Ovary (tissue), 10 donors: ENCODE measurements at regions of chr12 and their contacts with region 1.

Region 1: GRCh38 chr12:90106568-90106967 is 397.9 kb upstream of the ATP2B1 start:
- DNase-seq: no peak
- H3K4me3 ChIP-seq: no peak overlapping the region
- H3K27ac ChIP-seq: no peak overlapping the region
- H3K4me1 ChIP-seq: peaks cover under 1% of the 10 kb centered on the region
- H3K27me3 ChIP-seq: no peaks in the 10 kb centered on the region
- CTCF ChIP-seq: no peak
- EP300 ChIP-seq: no peak
- POLR2A ChIP-seq: no peak

Region 2: DNA sequence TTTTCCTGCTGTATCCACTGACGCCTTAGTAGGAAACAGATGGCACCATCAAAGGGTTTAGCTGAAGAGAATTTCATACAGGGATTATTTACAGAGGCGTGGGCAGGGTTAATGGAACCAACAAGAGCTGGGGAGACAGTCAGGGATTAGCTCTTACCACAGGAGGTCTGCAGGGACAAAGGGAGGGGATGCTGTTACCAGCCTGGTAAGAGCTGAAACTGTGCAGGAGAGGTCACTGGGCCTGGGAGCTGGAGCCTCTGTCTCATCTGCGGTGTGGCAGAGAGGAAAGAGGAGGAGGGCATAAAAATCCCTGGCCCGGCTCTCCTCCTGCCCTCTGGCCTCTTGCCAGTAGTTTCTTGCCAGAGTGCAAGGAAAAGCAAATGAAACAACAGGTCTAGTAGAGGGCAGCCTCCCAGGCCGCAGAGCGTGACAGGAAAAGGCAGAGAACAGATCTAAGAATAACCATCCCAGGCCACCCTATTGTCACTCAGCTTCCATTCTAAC is 561.8 kb before region 1 on chr12:
- intact Hi-C with region 1: loop called in 1 of 4 experiments (anchors 5 kb)
- DNase-seq: peak in 3 of 5 donors; percentile 13 to 40 (median 31)
- H3K4me3 ChIP-seq: no peak overlapping the region
- H3K27ac ChIP-seq: no peak overlapping the region
- H3K4me1 ChIP-seq: peaks cover 3% of the 10 kb centered on the region
- H3K27me3 ChIP-seq: no peaks in the 10 kb centered on the region
- CTCF ChIP-seq: no peak
- EP300 ChIP-seq: no peak
- POLR2A ChIP-seq: no peak

Region 3: DNA sequence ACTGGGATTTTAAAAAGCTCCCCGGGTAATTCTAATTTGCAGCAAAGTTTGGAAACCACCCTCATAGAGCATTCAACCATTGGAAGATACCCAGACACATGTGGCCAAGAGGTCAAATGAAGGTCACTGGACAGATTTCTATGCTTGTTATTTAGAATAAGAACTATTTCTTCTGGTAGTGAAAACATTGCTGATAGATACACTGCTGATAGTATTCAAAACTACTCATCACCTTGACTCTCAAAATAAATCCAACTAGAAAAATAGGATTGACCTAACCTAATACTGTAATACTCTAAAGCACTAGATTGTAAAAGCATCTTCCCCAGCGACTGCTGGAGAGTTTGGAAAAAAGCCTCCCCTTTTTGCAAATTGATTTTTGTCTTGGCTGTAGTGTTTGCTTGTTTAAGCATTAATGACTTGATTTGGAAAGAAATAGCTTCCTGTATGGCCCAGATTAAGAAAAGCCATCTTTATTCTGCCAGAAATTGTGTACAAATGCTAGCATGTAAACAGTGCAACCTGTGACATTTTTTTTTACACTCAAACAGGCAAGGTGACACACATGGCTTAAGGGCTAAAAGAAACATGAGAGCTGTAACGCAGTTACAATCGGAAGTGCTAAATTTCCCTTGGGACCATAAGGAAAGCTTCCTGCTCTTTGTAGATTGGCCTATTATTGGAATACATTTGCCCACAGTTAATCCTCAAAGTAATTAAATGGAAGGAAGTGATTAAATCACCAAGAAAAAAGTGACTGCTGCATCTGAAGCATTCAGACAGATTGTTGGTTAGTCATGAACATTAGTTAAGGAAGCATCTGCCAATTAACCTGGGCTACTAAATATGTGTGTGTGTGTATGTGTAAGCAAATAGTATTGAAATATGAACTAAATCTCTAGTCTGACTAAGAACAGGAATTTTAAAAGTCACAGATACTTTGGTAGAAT is 41.4 kb before region 1 on chr12:
- intact Hi-C with region 1: no loop called
- DNase-seq: no peak
- H3K4me3 ChIP-seq: no peak overlapping the region
- H3K27ac ChIP-seq: no peak overlapping the region
- H3K4me1 ChIP-seq: no peaks in the 10 kb centered on the region
- H3K27me3 ChIP-seq: no peaks in the 10 kb centered on the region
- CTCF ChIP-seq: no peak
- EP300 ChIP-seq: no peak
- POLR2A ChIP-seq: no peak